GM12878 (cell line): ENCODE measurements at regions of chr5 and their contacts with region 1.

Region 1: DNA sequence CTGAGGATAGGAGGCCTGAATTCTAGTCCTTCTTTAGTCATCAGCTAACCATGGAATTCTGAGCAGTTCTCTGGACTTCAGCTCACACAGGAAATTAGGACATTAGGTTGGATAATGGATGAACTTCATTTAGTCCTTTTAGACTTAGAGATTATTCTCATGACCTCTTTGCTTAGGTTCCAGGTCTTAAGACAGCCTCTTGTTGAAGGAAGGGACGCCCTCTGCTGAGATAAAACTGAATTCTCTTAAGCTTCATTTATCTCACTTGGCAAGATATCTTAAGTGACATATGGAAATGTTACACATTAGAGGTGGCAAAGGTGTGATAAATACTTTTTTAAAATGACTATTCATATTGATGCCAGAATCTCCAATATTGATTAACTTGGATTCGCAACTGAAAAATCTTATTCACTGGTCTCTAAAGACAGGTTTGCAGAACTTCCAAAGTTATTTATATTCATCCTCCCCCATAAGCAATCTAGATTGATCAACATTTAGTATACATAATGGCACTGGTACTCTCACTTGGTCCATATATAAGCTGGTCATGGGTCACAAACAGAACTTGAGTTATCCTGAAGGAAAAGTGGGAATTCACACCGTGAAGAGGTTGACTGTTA is 16.9 kb upstream of the ZNF366 start:
- DNase-seq: peak; percentile 52
- ATAC-seq: peak; percentile 94
- H3K4me3 ChIP-seq: no peak overlapping the region
- H3K27ac ChIP-seq: no peak overlapping the region
- H3K4me1 ChIP-seq: no peaks in the 10 kb centered on the region
- H3K27me3 ChIP-seq: no peaks in the 10 kb centered on the region
- CTCF ChIP-seq: peak; percentile 50 to 86 (median 66); a peak in 5 of 6 replicates
- EP300 ChIP-seq: no peak; a peak in 1 of 4 replicates
- POLR2A ChIP-seq: no peak
- RAD21 ChIP-seq: peak; percentile 99

Region 2: GRCh38 chr5:72355706-72356299 is 168.3 kb before region 1 on chr5:
- CTCF ChIA-PET with region 1: interaction called, 16 read pairs
- POLR2A ChIA-PET with region 1: no interaction called
- RAD21 ChIA-PET with region 1: interaction called, 9 read pairs
- SMC1A ChIA-PET with region 1: interaction called, 10 read pairs
- in situ Hi-C with region 1: no loop called
- intact Hi-C with region 1: no loop called
- DNase-seq: no peak
- ATAC-seq: no peak
- H3K4me3 ChIP-seq: no peak overlapping the region
- H3K27ac ChIP-seq: no peak overlapping the region
- H3K4me1 ChIP-seq: no peaks in the 10 kb centered on the region
- H3K27me3 ChIP-seq: no peaks in the 10 kb centered on the region
- CTCF ChIP-seq: peak; percentile 9 to 33 (median 28); a peak in 3 of 6 replicates
- EP300 ChIP-seq: no peak
- POLR2A ChIP-seq: no peak
- RAD21 ChIP-seq: no peak

Region 3: GRCh38 chr5:72378636-72379290 is 145.3 kb before region 1 on chr5:
- CTCF ChIA-PET with region 1: interaction called, 22 read pairs
- POLR2A ChIA-PET with region 1: no interaction called
- RAD21 ChIA-PET with region 1: interaction called, 8 read pairs
- SMC1A ChIA-PET with region 1: interaction called, 29 read pairs
- in situ Hi-C with region 1: loop called (anchors 10 kb)
- intact Hi-C with region 1: no loop called
- DNase-seq: no peak
- ATAC-seq: no peak
- H3K4me3 ChIP-seq: no peak overlapping the region
- H3K27ac ChIP-seq: no peak overlapping the region
- H3K4me1 ChIP-seq: peaks cover 9% of the 10 kb centered on the region
- H3K27me3 ChIP-seq: no peaks in the 10 kb centered on the region
- CTCF ChIP-seq: no peak
- EP300 ChIP-seq: no peak
- POLR2A ChIP-seq: no peak
- RAD21 ChIP-seq: no peak

Region 4: DNA sequence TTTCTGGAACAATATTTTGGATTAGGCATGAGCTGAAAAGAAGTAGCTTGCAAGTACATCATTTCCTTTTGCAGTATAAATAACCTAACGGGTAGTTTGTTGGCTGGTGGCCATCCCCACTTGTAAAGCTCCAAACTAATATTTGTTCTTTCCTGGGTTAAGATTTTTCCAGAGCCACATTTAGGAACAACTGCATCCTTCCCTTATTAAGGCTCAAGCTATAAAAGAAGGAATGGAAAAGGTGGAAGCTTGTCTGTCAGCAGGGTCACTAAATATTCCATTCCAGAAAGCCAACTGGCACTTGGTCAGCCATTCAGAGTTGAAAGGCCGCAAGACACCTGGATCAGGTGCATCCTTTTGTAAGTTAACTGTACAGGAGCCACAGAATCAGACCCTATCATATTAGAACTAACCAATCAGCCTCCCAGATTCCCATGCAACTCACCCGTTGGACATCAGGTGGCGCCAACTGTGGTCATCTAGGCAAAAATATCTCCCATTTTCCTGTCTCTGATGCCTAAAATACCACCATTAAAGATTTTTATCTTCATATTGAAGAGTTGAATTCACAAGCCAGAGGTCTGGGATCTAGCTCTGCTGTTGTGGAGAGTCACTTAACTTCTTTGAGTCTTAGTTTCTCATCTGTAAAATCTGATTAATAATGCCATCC is 121.0 kb before region 1 on chr5:
- CTCF ChIA-PET with region 1: interaction called, 323 read pairs
- POLR2A ChIA-PET with region 1: no interaction called
- RAD21 ChIA-PET with region 1: interaction called, 122 read pairs
- SMC1A ChIA-PET with region 1: interaction called, 159 read pairs
- in situ Hi-C with region 1: no loop called
- intact Hi-C with region 1: no loop called
- DNase-seq: no peak
- ATAC-seq: no peak
- H3K4me3 ChIP-seq: no peak overlapping the region
- H3K27ac ChIP-seq: no peak overlapping the region
- H3K4me1 ChIP-seq: no peaks in the 10 kb centered on the region
- H3K27me3 ChIP-seq: no peaks in the 10 kb centered on the region
- CTCF ChIP-seq: peak in 1 of 3 experiments; percentile 18; a peak in 2 of 6 replicates
- EP300 ChIP-seq: no peak
- POLR2A ChIP-seq: no peak
- RAD21 ChIP-seq: 0 out of 2 replicates have a peak, but pooled peaks have one; percentile 1

Region 5: GRCh38 chr5:72451741-72452505 is 72.1 kb before region 1 on chr5:
- CTCF ChIA-PET with region 1: interaction called, 22 read pairs
- POLR2A ChIA-PET with region 1: no interaction called
- RAD21 ChIA-PET with region 1: interaction called, 5 read pairs
- SMC1A ChIA-PET with region 1: interaction called, 18 read pairs
- in situ Hi-C with region 1: no loop called
- intact Hi-C with region 1: no loop called
- DNase-seq: peak; percentile 75
- ATAC-seq: peak; percentile 94
- H3K4me3 ChIP-seq: no peak overlapping the region
- H3K27ac ChIP-seq: peak overlapping the region; percentile 76
- H3K4me1 ChIP-seq: peaks cover 12% of the 10 kb centered on the region
- H3K27me3 ChIP-seq: no peaks in the 10 kb centered on the region
- CTCF ChIP-seq: no peak
- EP300 ChIP-seq: peak in 1 of 2 experiments; percentile 9; a peak in 1 of 4 replicates
- POLR2A ChIP-seq: no peak
- RAD21 ChIP-seq: no peak

Region 6: GRCh38 chr5:72486371-72486770 is 37.7 kb before region 1 on chr5:
- CTCF ChIA-PET with region 1: interaction called, 9 read pairs
- POLR2A ChIA-PET with region 1: no interaction called
- RAD21 ChIA-PET with region 1: interaction called, 13 read pairs
- SMC1A ChIA-PET with region 1: interaction called, 22 read pairs
- in situ Hi-C with region 1: no loop called
- intact Hi-C with region 1: no loop called
- DNase-seq: no peak
- ATAC-seq: no peak
- H3K4me3 ChIP-seq: no peak overlapping the region
- H3K27ac ChIP-seq: no peak overlapping the region
- H3K4me1 ChIP-seq: no peaks in the 10 kb centered on the region
- H3K27me3 ChIP-seq: no peaks in the 10 kb centered on the region
- CTCF ChIP-seq: no peak
- EP300 ChIP-seq: no peak
- POLR2A ChIP-seq: no peak
- RAD21 ChIP-seq: no peak

Region 7: GRCh38 chr5:72624641-72625236 is 100.7 kb after region 1 on chr5:
- CTCF ChIA-PET with region 1: no interaction called
- POLR2A ChIA-PET with region 1: no interaction called
- RAD21 ChIA-PET with region 1: no interaction called
- SMC1A ChIA-PET with region 1: no interaction called
- in situ Hi-C with region 1: no loop called
- intact Hi-C with region 1: no loop called
- DNase-seq: no peak
- ATAC-seq: no peak
- H3K4me3 ChIP-seq: no peak overlapping the region
- H3K27ac ChIP-seq: no peak overlapping the region
- H3K4me1 ChIP-seq: no peaks in the 10 kb centered on the region
- H3K27me3 ChIP-seq: peaks cover 2 to 9% of the 10 kb centered on the region in 2 experiments; a peak in 3 of 4 replicates
- CTCF ChIP-seq: no peak
- EP300 ChIP-seq: no peak
- POLR2A ChIP-seq: no peak
- RAD21 ChIP-seq: no peak

Region 8: GRCh38 chr5:72988769-72989168 is 464.7 kb after region 1 on chr5:
- CTCF ChIA-PET with region 1: no interaction called
- POLR2A ChIA-PET with region 1: no interaction called
- RAD21 ChIA-PET with region 1: no interaction called
- SMC1A ChIA-PET with region 1: no interaction called
- in situ Hi-C with region 1: no loop called
- intact Hi-C with region 1: no loop called
- DNase-seq: no peak
- ATAC-seq: no peak
- H3K4me3 ChIP-seq: no peak overlapping the region
- H3K27ac ChIP-seq: no peak overlapping the region
- H3K4me1 ChIP-seq: no peaks in the 10 kb centered on the region
- H3K27me3 ChIP-seq: no peaks in the 10 kb centered on the region
- CTCF ChIP-seq: no peak
- EP300 ChIP-seq: no peak
- POLR2A ChIP-seq: no peak
- RAD21 ChIP-seq: no peak